Panc1 (cell line): ENCODE measurements at regions of chr17 and their contacts with region 1.

Region 1: DNA sequence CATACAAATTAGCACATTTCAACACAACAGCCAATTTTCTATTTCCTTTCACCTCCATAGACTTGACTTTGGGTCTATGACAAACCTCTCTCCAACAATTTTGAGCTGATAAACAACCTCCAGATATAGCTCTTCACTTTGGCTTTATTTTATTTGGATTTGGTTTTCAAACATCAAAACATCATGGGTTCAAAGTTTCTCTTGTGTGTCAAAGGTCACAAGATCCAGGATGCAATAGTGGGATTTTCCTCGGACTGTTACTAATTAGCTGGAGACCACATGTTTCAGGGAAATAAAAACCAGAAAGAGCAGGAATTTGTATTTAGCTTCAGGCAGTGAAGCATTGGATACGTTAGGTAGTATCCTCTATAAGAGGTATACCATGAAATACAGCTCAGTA is 351.0 kb upstream of the SOX9 start:
- DNase-seq: no peak
- ATAC-seq: no peak
- H3K4me3 ChIP-seq: no peak overlapping the region
- H3K27ac ChIP-seq: no peak overlapping the region
- H3K4me1 ChIP-seq: no peaks in the 10 kb centered on the region
- H3K27me3 ChIP-seq: no peaks in the 10 kb centered on the region; the same call in 1 of the 2 replicates
- CTCF ChIP-seq: no peak

Region 2: GRCh38 chr17:71203953-71204352 is 565.9 kb before region 1 on chr17:
- CTCF ChIA-PET with region 1: interaction called, 10 read pairs
- POLR2A ChIA-PET with region 1: no interaction called
- in situ Hi-C with region 1: no loop called
- intact Hi-C with region 1: no loop called
- DNase-seq: no peak
- ATAC-seq: no peak
- H3K4me3 ChIP-seq: no peak overlapping the region
- H3K27ac ChIP-seq: no peak overlapping the region
- H3K4me1 ChIP-seq: no peaks in the 10 kb centered on the region
- H3K27me3 ChIP-seq: no peaks in the 10 kb centered on the region
- CTCF ChIP-seq: no peak

Region 3: DNA sequence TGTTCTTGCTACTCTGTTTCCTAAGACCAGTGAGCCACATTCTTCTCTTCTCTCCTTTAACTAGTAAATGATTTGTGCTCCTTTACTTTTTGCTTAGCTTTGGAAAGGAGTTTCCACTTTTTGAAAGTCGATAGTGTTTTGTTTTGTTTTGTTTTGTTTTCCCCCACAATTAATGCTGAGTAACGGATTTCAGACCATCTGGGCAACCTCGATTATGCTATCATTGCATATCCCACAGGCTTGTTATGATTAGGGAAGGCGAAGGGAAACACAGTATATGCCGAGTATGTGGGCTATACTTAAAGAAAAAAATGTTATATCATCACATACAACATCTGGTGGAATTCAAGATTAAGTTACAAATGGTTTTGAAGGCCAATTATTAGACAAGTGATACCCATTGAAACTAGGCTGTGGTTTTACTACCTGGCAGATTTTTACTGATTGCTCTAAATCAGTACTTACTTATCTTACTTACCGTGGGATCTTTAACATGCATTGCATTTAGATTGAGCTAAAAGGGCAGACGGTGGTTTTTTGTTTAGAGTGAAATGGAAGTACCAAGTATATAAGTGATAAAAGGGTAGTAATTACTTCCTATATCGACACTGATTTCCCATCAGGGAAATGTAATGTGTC is 10.3 kb before region 1 on chr17:
- CTCF ChIA-PET with region 1: no interaction called
- POLR2A ChIA-PET with region 1: no interaction called
- in situ Hi-C with region 1: no loop called
- intact Hi-C with region 1: no loop called
- DNase-seq: no peak
- ATAC-seq: no peak
- H3K4me3 ChIP-seq: no peak overlapping the region
- H3K27ac ChIP-seq: no peak overlapping the region
- H3K4me1 ChIP-seq: no peaks in the 10 kb centered on the region
- H3K27me3 ChIP-seq: no peaks in the 10 kb centered on the region; the same call in 1 of the 2 replicates
- CTCF ChIP-seq: no peak